ENCODE measurements at regions of chr20 and their contacts with region 1.

Region 1: GRCh38 chr20:53957451-53958172 is 112.8 kb downstream of the BCAS1 start:
- DNase-seq: no peak
- ATAC-seq: no peak
- H3K4me3 ChIP-seq: no peak overlapping the region
- H3K4me3 Mint-ChIP-seq: no peak overlapping the region
- H3K27ac ChIP-seq: no peak overlapping the region
- H3K27ac Mint-ChIP-seq: no peak overlapping the region
- H3K4me1 ChIP-seq: no peaks in the 10 kb centered on the region
- H3K4me1 Mint-ChIP-seq: no peaks in the 10 kb centered on the region
- H3K27me3 ChIP-seq: no peaks in the 10 kb centered on the region
- H3K27me3 Mint-ChIP-seq: peaks cover 3% of the 10 kb centered on the region
- CTCF ChIP-seq: no peak

Region 2: DNA sequence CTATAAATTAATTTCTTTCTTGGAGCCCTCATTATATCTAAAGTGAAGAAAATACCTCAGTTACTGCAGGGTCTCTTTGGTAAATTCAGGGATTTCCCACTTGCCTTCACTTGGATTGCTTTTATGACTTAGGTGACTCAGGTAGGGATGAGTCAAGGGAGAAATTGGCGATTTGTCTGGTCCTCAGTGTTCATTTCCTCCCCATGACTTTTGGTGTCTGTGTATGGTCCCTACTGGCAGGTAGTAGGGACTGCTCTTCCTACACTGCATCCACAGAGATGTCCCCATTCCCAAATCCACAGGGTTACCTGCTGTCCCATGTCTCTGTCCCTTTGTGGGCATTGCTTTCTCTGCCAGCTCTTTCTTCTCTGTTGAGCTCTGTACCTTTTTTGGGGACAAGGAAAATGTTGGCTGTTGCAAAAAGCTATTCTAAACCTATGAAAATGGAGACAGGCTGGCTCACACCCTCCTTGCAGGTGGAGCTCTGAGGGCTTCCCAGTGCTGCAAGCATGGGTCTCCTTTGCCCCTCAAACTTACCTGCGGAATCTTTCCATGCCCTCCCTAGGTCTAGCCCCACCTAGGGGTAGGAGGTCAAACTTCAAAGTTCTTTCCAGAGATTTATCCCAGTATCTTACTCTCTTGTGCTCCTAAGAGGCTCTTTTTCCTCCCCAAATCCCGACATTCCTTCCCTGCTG is 575.9 kb before region 1 on chr20:
- CTCF ChIA-PET with region 1: no interaction called
- POLR2A ChIA-PET with region 1: no interaction called
- intact Hi-C with region 1: loop called in 1 of 2 experiments (anchors 10 kb)
- DNase-seq: no peak
- ATAC-seq: no peak
- H3K4me3 ChIP-seq: no peak overlapping the region
- H3K4me3 Mint-ChIP-seq: no peak overlapping the region
- H3K27ac ChIP-seq: no peak overlapping the region
- H3K27ac Mint-ChIP-seq: no peak overlapping the region
- H3K4me1 ChIP-seq: no peaks in the 10 kb centered on the region
- H3K4me1 Mint-ChIP-seq: peaks cover 3% of the 10 kb centered on the region
- H3K27me3 ChIP-seq: no peaks in the 10 kb centered on the region
- H3K27me3 Mint-ChIP-seq: no peaks in the 10 kb centered on the region
- CTCF ChIP-seq: no peak

Region 3: DNA sequence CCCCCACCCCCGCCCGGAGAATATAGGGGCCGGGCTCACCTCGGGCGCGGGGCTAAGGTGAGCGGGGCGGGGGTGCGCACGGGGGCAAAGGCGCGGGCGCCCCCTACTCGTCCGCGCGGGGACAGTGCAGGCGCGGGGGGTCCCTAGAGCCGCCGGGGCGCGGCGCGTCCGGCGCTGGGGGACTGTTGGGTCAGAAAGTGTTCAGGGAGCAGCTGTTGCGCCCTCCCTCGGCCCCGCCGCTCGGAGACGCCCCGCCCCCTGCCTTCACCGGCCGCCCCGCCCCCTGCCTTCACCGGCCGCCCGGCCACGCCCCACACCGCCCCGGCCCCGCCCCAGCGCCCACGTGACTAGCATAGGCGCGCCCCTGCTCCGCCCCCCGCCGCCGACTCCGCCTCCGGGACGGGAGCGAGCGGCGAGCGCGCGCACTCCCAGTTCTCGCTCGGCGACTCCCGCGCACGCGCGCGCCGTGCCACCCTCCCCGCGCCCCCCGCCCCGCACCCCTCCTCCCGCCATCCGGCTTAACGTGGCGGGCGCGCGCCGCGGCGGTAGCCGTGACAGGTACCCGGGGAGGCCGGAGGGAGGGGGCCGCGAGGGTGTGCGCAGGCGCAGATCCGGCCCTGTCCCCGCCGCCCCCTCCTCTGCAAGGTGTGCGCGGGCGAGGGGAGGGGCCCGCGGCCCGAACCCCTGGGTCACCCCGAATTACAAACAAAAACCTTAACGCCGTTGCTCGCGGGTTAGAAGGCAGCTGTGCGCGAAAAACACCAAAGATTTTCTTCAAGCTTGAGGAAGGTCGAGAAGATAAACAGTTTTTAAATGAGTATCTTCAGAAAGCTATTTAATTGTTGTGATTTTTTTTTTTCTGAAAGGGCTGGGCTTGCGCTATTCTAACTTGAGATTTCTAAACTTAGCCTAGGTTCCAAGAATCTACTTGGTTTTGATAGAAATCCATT is 363.3 kb before region 1 on chr20:
- CTCF ChIA-PET with region 1: no interaction called
- POLR2A ChIA-PET with region 1: no interaction called
- intact Hi-C with region 1: no loop called
- DNase-seq: peak; percentile 94 to 100 (median 98)
- ATAC-seq: peak; percentile 74
- H3K4me3 ChIP-seq: peak overlapping the region; percentile 67 to 83
- H3K4me3 Mint-ChIP-seq: peak overlapping the region; percentile 82
- H3K27ac ChIP-seq: peak overlapping the region; percentile 84 to 87
- H3K27ac Mint-ChIP-seq: peak overlapping the region; percentile 92
- H3K4me1 ChIP-seq: peaks cover 42% of the 10 kb centered on the region
- H3K4me1 Mint-ChIP-seq: peaks cover 59% of the 10 kb centered on the region
- H3K27me3 ChIP-seq: no peaks in the 10 kb centered on the region
- H3K27me3 Mint-ChIP-seq: no peaks in the 10 kb centered on the region
- CTCF ChIP-seq: no peak